IMR-90 (cell line): ENCODE measurements at regions of chr4 and their contacts with region 1.

Region 1: DNA sequence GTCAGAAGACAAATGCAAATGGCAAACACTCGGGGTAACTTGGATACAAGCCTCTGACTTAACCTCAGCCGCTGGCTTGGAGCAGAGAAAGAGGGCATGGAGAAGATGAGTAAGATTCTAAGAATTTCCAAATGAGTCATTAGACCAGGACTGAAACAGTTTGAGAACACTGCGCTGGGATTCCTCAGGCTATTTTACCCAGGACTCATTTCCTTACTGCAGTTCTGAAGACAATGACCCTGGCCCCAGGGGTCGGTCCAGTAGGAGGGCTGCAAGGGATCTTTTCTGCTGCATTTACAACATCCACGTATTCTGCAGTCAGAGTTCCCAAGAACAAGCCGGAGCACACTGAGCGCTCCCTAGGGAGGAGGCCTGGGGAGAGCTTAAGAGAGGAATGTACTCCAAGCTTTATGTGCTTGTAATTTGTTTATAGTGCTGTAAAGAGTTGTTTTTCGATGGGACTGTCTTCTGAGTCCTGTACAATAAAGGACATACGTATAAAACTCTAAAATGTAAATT is 27.3 kb upstream of the SORBS2 start:
- DNase-seq: peak; percentile 91
- ATAC-seq: peak; percentile 91
- H3K4me3 ChIP-seq: no peak overlapping the region
- H3K27ac ChIP-seq: peak overlapping the region; percentile 88
- H3K4me1 ChIP-seq: peaks cover 24% of the 10 kb centered on the region
- H3K27me3 ChIP-seq: no peaks in the 10 kb centered on the region
- CTCF ChIP-seq: no peak
- POLR2A ChIP-seq: no peak
- RAD21 ChIP-seq: no peak

Region 2: DNA sequence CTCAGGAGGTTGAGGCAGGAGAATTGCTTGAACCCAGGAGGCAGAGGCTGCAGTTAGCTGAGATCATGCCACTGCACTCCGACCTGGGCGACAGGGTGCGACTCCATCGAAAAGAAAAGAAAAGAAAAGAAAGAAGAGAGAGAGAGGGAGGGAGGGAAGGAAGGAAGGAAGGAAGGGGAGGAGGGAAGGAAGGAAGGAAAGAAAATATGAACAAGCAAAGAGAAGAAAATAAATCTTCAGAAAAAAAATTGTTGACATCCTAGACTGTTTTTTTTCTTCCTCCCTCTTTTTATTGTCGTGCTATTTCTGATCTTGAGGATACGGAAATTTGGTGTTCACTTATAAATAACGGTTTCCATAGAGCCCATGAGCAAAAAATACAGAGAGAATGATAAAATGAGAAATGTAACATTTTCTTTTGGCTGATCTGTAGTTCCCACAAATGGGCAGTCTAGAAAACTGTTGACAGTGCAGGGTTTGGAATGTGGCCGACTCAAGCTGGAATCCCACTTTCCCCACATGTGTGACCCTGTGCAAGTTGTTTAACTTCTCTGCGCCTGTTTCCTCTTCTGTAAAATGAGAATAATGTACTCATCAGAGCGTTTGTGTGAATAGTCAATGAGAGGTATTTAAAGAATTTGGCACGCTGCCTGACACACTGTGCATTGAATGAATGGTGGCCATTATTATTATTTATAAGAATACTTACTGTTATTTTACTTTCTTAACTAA is 46.7 kb before region 1 on chr4:
- CTCF ChIA-PET with region 1: no interaction called
- POLR2A ChIA-PET with region 1: no interaction called
- dilution Hi-C with region 1: no loop called
- in situ Hi-C with region 1: no loop called
- intact Hi-C with region 1: loop called (anchors 2 kb)
- DNase-seq: peak; percentile 96
- ATAC-seq: peak; percentile 92
- H3K4me3 ChIP-seq: no peak overlapping the region
- H3K27ac ChIP-seq: peak overlapping the region; percentile 20; the same call in 1 of the 2 replicates
- H3K4me1 ChIP-seq: peaks cover 11% of the 10 kb centered on the region
- H3K27me3 ChIP-seq: peaks cover 2% of the 10 kb centered on the region; the same call in 1 of the 2 replicates
- CTCF ChIP-seq: no peak
- POLR2A ChIP-seq: no peak
- RAD21 ChIP-seq: no peak

Region 3: DNA sequence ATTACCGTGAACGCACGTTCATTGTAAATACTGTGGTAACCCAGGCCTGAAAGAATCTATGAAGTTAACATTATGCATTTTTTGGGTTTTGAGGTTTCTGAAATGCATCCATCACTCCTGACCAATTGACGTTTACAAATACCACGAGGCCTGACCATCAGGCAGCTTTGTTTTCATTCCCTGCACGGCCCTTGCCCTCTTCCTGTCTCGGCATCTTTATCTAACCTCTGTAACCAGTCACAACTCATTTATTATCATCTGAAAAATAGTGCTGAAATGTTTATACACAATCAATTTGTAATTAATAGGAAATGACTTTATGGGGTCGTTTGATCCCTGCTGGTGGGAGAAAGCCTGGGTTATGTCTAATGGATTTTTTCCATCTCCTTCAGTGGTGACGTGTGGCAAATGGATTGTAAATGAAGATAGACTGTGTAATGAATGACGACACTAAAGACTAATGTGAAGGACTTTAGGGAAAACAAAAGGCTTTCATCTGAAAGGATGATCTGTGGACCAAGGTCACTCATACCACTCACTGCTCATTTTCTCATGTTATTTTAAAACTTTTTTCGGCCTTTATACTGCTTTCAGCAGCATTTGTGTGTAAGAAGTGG is 75.4 kb after region 1 on chr4:
- CTCF ChIA-PET with region 1: interaction called, 3 read pairs
- POLR2A ChIA-PET with region 1: interaction called, 3 read pairs
- dilution Hi-C with region 1: no loop called
- in situ Hi-C with region 1: no loop called
- intact Hi-C with region 1: loop called (anchors 2 kb)
- DNase-seq: peak; percentile 82
- ATAC-seq: peak; percentile 87
- H3K4me3 ChIP-seq: no peak overlapping the region
- H3K27ac ChIP-seq: no peak overlapping the region
- H3K4me1 ChIP-seq: peaks cover 3% of the 10 kb centered on the region; the same call in 1 of the 2 replicates
- H3K27me3 ChIP-seq: peaks cover 55% of the 10 kb centered on the region
- CTCF ChIP-seq: no peak
- POLR2A ChIP-seq: no peak
- RAD21 ChIP-seq: no peak